B cell (primary cell): ENCODE measurements at regions of chr3 and their contacts with region 1.

Region 1: GRCh38 chr3:98593046-98593936 is at the start of gene CPOX:
- DNase-seq: peak; percentile 79
- ATAC-seq: peak; percentile 93
- H3K4me3 ChIP-seq: peak within 1 kb of the TSS; percentile 63 to 90 (median 69)
- H3K4me3 Mint-ChIP-seq: peak within 1 kb of the TSS; percentile 98
- H3K27ac ChIP-seq: peak within 1 kb of the TSS; percentile 60 to 76
- H3K27ac Mint-ChIP-seq: peak within 1 kb of the TSS; percentile 87
- H3K4me1 ChIP-seq: peaks cover 9 to 20% of the 10 kb centered on the region in 2 donors
- H3K4me1 Mint-ChIP-seq: peaks cover 26% of the 10 kb centered on the region
- H3K27me3 ChIP-seq: no peaks in the 10 kb centered on the region
- H3K27me3 Mint-ChIP-seq: no peaks in the 10 kb centered on the region
- CTCF ChIP-seq: no peak
- total RNA-seq, gene CPOX: 17.5 and 22.0 TPM in 2 replicates

Region 2: DNA sequence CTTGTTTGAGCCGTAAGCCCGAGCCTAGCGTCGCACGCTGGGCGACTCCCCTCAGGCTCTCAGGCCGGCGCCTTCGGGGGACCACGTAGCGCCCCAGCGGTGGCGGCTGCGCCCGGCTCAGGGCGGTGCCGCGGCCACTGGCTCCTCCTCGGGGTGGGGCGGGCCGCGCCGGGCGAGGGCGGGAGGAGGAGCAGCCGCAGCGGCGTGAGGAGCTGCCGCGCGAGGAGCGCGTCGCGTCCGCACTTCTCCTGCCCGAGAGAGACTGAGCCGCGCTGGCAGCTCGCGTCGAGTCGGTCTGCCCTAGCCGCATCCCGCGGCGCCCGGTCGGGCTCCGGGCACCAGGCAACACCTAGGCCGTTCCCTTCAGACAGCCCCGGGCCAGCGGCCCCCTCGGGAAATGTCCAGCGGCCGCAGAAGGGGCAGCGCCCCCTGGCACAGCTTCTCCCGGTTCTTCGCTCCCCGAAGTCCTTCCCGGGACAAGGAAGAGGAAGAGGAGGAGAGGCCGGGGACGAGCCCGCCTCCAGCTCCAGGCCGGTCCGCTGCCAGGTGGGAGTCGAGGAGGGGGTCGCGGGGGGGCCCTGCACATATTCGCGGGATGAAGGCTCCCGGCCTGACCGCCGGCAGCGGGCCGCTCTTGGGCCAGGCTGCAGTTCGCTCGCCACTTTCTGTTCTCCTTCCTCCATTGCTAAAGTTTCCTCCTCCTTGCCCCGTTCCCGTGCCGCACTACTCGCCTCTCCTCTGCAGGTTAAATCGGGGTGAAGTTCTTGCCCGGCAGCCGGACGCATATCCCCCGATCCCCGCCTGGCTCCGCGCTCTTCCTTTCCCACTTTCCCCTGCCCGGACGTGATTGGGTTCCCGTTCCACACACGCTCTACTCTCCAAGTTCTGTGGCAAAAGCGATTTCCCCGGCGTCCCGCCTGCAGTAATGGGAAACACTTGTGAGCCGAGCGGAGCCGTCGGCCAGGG is 771.2 kb before region 1 on chr3 and contains the start of gene CRYBG3:
- CTCF ChIA-PET with region 1: no interaction called
- POLR2A ChIA-PET with region 1: no interaction called
- intact Hi-C with region 1: loop called (anchors 5 kb)
- DNase-seq: peak; percentile 87
- ATAC-seq: peak; percentile 99
- H3K4me3 ChIP-seq: peak within 1 kb of the TSS; percentile 65 to 93 (median 70)
- H3K4me3 Mint-ChIP-seq: peak within 1 kb of the TSS; percentile 95
- H3K27ac ChIP-seq: peak within 1 kb of the TSS in 1 of 2 donors; percentile 22
- H3K27ac Mint-ChIP-seq: peak within 1 kb of the TSS; percentile 85
- H3K4me1 ChIP-seq: peaks cover 15 to 17% of the 10 kb centered on the region in 2 donors
- H3K4me1 Mint-ChIP-seq: peaks cover 24% of the 10 kb centered on the region
- H3K27me3 ChIP-seq: peaks cover 0 to 26% (median 15%) of the 10 kb centered on the region in 4 experiments
- H3K27me3 Mint-ChIP-seq: peaks cover 55% of the 10 kb centered on the region
- CTCF ChIP-seq: no peak
- total RNA-seq, gene CRYBG3: 2.0 and 2.2 TPM in 2 replicates

Region 3: DNA sequence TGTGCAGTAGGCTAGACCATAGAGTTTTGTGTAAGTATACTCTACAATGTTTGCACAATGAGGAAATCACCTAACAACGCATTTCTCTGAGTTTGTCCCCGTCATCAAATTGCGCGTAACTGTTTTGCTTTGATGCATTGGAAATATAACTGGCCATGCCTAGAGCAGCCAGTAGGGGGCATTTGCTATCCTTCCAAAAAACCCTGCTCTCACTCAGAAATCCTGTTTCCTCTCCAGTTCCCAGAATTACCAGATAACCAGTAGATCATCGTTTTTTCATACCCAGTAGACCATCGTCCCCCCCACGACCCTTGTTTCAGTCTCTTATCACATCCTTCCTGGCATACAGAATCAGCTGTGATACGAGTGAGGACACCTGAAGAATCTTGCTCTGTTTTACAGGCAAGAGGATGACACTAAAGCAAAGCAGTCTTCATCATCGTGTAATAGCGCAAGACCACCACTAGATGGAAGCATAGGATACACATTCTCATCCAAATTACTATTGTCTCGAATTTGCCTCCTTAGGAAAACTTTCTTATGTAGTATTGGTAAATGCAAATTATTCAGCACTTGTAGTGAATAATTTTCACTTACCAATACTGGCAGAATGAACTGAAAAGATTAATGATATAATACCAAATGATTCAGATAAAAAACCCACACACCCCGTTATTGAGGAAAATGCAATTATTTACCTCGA is 553.8 kb before region 1 on chr3:
- CTCF ChIA-PET with region 1: interaction called, 3 read pairs
- POLR2A ChIA-PET with region 1: no interaction called
- intact Hi-C with region 1: loop called (anchors 1 kb)
- DNase-seq: peak; percentile 87
- ATAC-seq: peak; percentile 97
- H3K4me3 ChIP-seq: peak overlapping the region in 4 of 5 experiments; percentile 23 to 58 (median 42)
- H3K4me3 Mint-ChIP-seq: peak overlapping the region; percentile 85
- H3K27ac ChIP-seq: no peak overlapping the region
- H3K27ac Mint-ChIP-seq: peak overlapping the region; percentile 59
- H3K4me1 ChIP-seq: peaks cover 0 to 5% of the 10 kb centered on the region in 2 donors
- H3K4me1 Mint-ChIP-seq: peaks cover 5% of the 10 kb centered on the region
- H3K27me3 ChIP-seq: peaks cover 0 to 4% (median 0%) of the 10 kb centered on the region in 4 experiments
- H3K27me3 Mint-ChIP-seq: peaks cover 27% of the 10 kb centered on the region
- CTCF ChIP-seq: peak; percentile 98

Region 4: GRCh38 chr3:98504539-98504938 is 88.8 kb before region 1 on chr3:
- CTCF ChIA-PET with region 1: no interaction called
- POLR2A ChIA-PET with region 1: no interaction called
- intact Hi-C with region 1: no loop called
- DNase-seq: no peak
- ATAC-seq: no peak
- H3K4me3 ChIP-seq: no peak overlapping the region
- H3K4me3 Mint-ChIP-seq: no peak overlapping the region
- H3K27ac ChIP-seq: no peak overlapping the region
- H3K27ac Mint-ChIP-seq: no peak overlapping the region
- H3K4me1 ChIP-seq: no peaks in the 10 kb centered on the region
- H3K4me1 Mint-ChIP-seq: no peaks in the 10 kb centered on the region
- H3K27me3 ChIP-seq: no peaks in the 10 kb centered on the region
- H3K27me3 Mint-ChIP-seq: no peaks in the 10 kb centered on the region
- CTCF ChIP-seq: no peak

Region 5: DNA sequence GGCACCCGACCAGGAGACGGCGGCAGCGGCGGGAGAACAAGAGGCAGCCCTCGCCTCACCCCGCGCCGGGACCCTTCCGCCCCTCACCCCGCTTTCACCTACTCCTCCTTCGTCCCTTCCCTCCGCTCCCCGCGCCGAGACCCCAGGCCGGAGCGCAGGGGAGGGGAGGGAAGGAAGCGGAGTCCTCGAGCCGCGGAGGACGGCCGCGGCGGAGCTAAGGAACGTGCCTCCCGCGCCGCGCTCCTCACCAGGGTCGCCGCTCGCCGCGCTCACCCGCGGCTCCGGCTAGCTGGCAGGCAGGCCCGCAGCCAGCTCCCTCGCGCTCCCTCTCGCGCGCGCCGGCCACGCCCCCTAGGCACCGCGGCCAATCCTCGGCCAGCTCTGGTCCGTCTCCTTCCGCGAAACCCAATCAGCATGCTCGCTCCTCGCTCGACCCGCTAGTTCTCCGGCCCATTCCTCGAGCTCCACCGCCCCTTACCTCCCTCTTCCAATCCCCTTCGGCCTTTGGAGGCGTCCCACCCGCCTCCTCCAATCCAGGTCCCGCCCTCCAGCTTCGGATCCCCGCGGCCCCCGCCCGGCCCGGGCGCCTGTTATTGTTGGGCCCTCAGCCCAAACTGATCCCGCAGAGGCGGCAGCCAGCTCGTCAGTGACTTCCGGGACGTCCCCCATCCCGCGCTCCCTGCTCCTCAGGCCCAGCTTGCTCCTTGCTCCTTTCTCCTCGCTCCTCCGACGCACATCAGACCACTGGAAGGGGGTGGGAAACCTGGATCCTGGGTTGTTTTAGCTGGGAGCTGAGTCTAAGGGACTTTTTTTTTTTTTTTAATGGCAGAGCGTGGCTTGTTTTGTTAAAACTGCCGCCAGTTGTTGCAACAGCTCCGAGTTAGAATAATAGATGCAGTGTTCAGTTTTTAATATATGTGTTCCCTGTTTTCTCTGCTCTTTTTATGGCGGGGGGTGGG is 308.4 kb after region 1 on chr3 and contains the start of gene DCBLD2:
- CTCF ChIA-PET with region 1: no interaction called
- POLR2A ChIA-PET with region 1: no interaction called
- intact Hi-C with region 1: loop called (anchors 5 kb)
- DNase-seq: peak; percentile 95
- ATAC-seq: peak; percentile 98
- H3K4me3 ChIP-seq: peak within 1 kb of the TSS; percentile 60 to 93 (median 68)
- H3K4me3 Mint-ChIP-seq: peak within 1 kb of the TSS; percentile 97
- H3K27ac ChIP-seq: peak within 1 kb of the TSS in 1 of 2 donors; percentile 64
- H3K27ac Mint-ChIP-seq: peak within 1 kb of the TSS; percentile 84
- H3K4me1 ChIP-seq: peaks cover 10 to 12% of the 10 kb centered on the region in 2 donors
- H3K4me1 Mint-ChIP-seq: peaks cover 17% of the 10 kb centered on the region
- H3K27me3 ChIP-seq: peaks cover 0 to 7% (median 2%) of the 10 kb centered on the region in 4 experiments
- H3K27me3 Mint-ChIP-seq: peaks cover 12% of the 10 kb centered on the region
- CTCF ChIP-seq: no peak
- total RNA-seq, gene DCBLD2: 2.1 and 3.5 TPM in 2 replicates